Astrocyte of the cerebellum (primary cell): ENCODE measurements at regions of chr21 and their contacts with region 1.

Region 1: DNA sequence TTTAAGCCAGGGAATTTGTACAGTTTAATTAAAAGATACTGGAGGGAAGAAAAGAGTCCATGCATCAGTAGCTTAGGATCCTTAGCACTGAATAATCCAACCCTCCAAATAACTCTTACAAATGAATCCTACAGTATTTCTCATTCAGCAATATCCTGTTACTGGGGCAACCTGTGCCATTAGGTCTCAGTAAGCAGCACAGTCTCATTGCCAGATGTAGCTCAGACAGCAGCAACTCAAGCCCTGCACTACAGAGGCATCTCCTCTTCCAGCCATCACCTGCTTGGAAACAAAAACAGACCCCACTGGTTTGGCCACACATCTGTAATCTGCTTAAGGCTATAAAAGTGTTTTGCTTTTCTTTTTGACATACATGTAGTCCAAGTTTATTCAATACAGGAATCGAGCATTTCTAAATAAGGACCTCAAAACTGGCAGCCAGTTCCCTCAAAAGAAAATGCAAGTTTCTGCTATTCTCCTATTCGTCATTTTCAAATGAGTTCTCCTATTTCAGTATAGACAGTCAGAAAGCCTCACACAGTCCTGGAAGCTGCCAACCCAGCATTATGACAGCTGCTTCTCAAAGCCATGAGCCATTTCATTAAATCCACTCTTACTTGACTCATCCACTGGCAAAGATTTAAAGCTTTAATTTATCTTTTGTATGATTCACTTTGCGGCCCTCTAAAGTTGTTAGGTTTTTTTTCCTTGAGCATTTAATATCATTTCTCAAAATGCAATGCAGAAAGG is 129.0 kb downstream of the APP start:
- DNase-seq: no peak
- H3K4me3 ChIP-seq: no peak overlapping the region
- CTCF ChIP-seq: no peak

Region 2: GRCh38 chr21:25895565-25896205 is 145.9 kb before region 1 on chr21:
- in situ Hi-C with region 1: loop called (anchors 10 kb)
- DNase-seq: no peak
- H3K4me3 ChIP-seq: no peak overlapping the region
- CTCF ChIP-seq: peak; percentile 57